ENCODE measurements at regions of chr15 and their contacts with region 1.

Region 1: GRCh38 chr15:87604857-87605446 is 651.6 kb downstream of the NTRK3 start:
- DNase-seq: peak; percentile 30
- ATAC-seq: no peak
- H3K4me3 Mint-ChIP-seq: no peak overlapping the region
- H3K27ac Mint-ChIP-seq: no peak overlapping the region
- H3K4me1 Mint-ChIP-seq: no peaks in the 10 kb centered on the region
- H3K27me3 Mint-ChIP-seq: peaks cover 5% of the 10 kb centered on the region

Region 2: DNA sequence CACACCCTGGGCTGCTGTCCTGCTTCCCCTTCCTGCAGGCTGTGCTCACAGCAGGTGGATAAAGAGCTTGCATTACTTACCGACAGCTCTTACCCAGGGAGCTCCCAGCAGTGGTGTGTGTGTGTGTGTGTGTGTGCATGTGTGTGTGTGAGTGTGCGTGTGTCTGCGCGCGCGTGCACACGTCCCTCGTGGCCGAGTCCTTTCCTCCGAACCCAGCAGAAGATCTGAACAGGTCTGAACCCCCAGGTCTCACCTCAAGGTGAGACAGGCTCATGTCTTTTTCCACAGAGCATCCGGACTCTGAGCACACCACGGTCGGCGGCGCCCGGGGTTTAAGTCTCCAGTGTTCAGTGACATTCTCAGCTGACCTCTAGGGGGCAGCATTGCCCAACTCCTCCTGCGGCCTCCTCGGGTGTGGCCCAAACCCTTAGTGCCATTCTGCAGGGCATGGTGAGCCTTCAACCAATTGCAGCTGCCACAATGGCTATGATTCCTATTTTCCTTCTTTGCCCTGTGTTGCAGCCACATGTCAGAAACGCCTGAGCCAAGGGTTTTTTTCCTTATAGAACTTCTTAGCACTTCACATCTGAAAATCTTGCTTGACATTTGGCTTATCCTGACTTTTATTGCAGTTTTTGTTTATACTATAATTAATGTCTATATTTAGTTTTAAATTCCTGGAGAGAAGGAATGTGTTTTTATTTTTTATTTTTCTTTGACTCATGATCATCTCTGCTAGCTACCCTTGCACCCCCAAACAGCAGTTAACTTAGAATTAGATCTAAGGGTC is 1746.2 kb before region 1 on chr15:
- CTCF ChIA-PET with region 1: interaction called, 3 read pairs
- POLR2A ChIA-PET with region 1: no interaction called
- intact Hi-C with region 1: loop called in 1 of 2 experiments (anchors 10 kb)
- DNase-seq: peak; percentile 89
- ATAC-seq: peak; percentile 95
- H3K4me3 Mint-ChIP-seq: peak overlapping the region; percentile 32
- H3K27ac Mint-ChIP-seq: no peak overlapping the region
- H3K4me1 Mint-ChIP-seq: peaks cover 5% of the 10 kb centered on the region
- H3K27me3 Mint-ChIP-seq: peaks cover 26% of the 10 kb centered on the region

Region 3: GRCh38 chr15:86231864-86232721 is 1372.9 kb before region 1 on chr15:
- CTCF ChIA-PET with region 1: no interaction called
- POLR2A ChIA-PET with region 1: no interaction called
- intact Hi-C with region 1: loop called in 1 of 2 experiments (anchors 10 kb)
- DNase-seq: peak; percentile 49
- ATAC-seq: peak; percentile 65
- H3K4me3 Mint-ChIP-seq: no peak overlapping the region
- H3K27ac Mint-ChIP-seq: no peak overlapping the region
- H3K4me1 Mint-ChIP-seq: no peaks in the 10 kb centered on the region
- H3K27me3 Mint-ChIP-seq: peaks cover 33% of the 10 kb centered on the region

Region 4: DNA sequence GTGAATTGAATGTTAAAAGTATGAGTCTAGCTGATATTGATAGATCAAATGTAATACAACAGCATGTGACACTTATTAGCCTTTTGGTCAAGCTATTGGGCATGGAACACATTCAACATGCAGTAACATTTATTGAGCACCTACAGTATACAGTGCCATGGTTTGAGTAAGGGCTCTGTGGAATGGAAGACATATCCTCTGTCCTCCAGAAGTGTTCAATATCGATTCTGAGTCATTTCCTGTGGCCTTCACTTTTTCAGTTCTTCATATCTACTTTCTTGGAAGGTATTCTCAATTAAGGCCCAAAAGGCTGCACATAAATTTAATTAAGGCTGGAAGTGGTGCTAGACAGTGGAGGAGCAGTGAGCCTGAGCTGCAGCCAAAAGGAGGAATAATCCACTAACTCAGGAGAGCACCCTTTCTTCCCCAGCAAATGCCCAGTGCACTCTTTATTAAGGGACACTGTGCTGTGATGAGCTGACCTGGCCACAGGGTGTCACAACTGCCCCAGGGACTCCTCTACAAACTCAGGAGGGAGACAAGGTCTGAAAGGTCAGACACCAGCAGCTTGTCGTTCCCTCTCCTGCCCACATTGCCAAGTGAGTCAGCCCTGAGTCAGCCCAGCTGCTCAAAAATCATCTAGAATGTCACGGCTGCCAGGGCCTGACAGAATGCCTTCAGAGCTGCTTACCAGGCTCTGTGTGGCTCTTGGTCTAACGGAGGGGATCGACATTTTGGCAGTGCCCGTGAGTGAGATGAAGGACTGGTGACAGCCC is 980.5 kb before region 1 on chr15:
- CTCF ChIA-PET with region 1: interaction called, 3 read pairs
- POLR2A ChIA-PET with region 1: no interaction called
- intact Hi-C with region 1: loop called in 1 of 2 experiments (anchors 2 kb)
- DNase-seq: peak; percentile 90
- ATAC-seq: peak; percentile 100
- H3K4me3 Mint-ChIP-seq: peak overlapping the region; percentile 15
- H3K27ac Mint-ChIP-seq: peak overlapping the region; percentile 53
- H3K4me1 Mint-ChIP-seq: peaks cover 42% of the 10 kb centered on the region
- H3K27me3 Mint-ChIP-seq: peaks cover 4% of the 10 kb centered on the region

Region 5: GRCh38 chr15:86915811-86916331 is 689.1 kb before region 1 on chr15:
- CTCF ChIA-PET with region 1: no interaction called
- POLR2A ChIA-PET with region 1: no interaction called
- intact Hi-C with region 1: loop called in 1 of 2 experiments (anchors 2 kb)
- DNase-seq: peak; percentile 4
- ATAC-seq: no peak
- H3K4me3 Mint-ChIP-seq: no peak overlapping the region
- H3K27ac Mint-ChIP-seq: no peak overlapping the region
- H3K4me1 Mint-ChIP-seq: no peaks in the 10 kb centered on the region
- H3K27me3 Mint-ChIP-seq: peaks cover 5% of the 10 kb centered on the region

Region 6: DNA sequence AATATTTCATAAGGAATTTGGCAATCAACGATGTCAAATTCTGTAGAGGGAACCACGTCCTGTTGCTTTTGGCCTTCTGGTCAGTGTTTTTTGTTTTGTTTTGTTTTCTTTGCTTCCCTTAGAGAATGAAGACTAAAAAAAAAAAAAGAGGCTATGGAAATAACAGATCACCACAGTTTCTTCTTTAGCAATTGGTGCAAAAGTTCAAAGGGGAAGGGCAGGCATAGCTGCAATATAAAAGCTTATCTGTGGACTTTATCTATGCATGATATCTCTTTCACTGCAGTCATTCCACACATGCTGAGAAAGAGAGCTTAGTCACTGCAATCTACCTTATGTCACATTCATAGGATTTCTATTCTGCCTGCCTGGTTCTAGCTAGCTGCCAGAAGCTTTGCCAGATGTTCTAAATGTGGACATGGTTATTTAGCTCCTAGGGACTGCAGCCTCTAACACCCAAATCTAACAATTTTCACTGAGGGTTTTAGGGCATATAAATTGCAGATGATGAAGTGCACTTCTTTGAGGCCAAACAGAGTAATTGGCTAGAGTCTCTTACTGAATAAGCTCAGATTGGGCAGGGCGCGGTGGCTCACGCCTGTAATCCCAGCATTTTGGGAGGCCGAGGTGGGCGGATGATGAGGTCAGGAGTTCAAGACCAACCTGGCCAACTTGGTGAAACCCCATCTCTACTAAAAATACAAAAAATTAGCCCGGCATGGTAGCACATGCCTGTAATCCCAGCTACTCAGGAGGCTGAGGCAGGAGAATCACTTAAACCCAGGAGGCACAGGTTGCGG is 14.4 kb after region 1 on chr15:
- CTCF ChIA-PET with region 1: interaction called, 10 read pairs
- POLR2A ChIA-PET with region 1: no interaction called
- intact Hi-C with region 1: no loop called
- DNase-seq: no peak
- ATAC-seq: no peak
- H3K4me3 Mint-ChIP-seq: no peak overlapping the region
- H3K27ac Mint-ChIP-seq: no peak overlapping the region
- H3K4me1 Mint-ChIP-seq: no peaks in the 10 kb centered on the region
- H3K27me3 Mint-ChIP-seq: peaks cover 2% of the 10 kb centered on the region